Heart left ventricle (tissue), 16 donors: ENCODE measurements at regions of chr4 and their contacts with region 1.

Region 1: DNA sequence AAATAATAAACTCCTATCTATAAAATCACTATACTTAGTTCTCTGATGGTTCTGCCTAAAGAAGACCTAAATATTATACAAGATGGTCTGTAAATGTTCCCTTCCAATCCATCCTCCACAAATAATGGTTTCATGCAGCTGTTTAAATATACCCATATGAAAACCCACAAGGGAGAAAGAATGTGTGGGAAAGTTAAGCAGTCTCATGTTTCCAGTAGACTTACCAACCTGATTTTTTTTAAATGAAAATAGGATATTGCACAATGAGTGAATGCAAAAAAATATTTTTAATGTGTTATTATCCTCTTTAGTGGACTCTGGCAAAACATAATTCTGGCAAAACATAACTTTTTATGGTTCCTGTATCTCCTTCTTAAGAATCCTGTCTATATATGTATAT is 23.3 kb downstream of the CAMK2D start:
- DNase-seq: no peak
- ATAC-seq: peak in 1 of 4 donors; percentile 40
- H3K4me3 ChIP-seq: no peak overlapping the region
- H3K27ac ChIP-seq: peak overlapping the region in 6 of 12 donors; percentile 4 to 47 (median 26)
- H3K4me1 ChIP-seq: peaks cover 3 to 68% (median 45%) of the 10 kb centered on the region in 12 donors
- H3K27me3 ChIP-seq: no peaks in the 10 kb centered on the region
- CTCF ChIP-seq: no peak
- POLR2A ChIP-seq: no peak

Region 2: GRCh38 chr4:113645771-113646441 is 92.3 kb before region 1 on chr4:
- intact Hi-C with region 1: loop called in 1 of 10 experiments (anchors 5 kb)
- DNase-seq: no peak
- ATAC-seq: peak in 3 of 4 donors; percentile 57 to 61 (median 59)
- H3K4me3 ChIP-seq: no peak overlapping the region
- H3K27ac ChIP-seq: peak overlapping the region in 11 of 12 donors; percentile 2 to 59 (median 51)
- H3K4me1 ChIP-seq: peaks cover 3 to 60% (median 48%) of the 10 kb centered on the region in 12 donors
- H3K27me3 ChIP-seq: no peaks in the 10 kb centered on the region
- CTCF ChIP-seq: no peak
- POLR2A ChIP-seq: no peak